HepG2 (cell line): ENCODE measurements at regions of chr4 and their contacts with region 1.

Region 1: GRCh38 chr4:52665592-52665991 is 6.5 kb upstream of the USP46 start:
- DNase-seq: peak; percentile 43
- ATAC-seq: peak; percentile 88
- H3K4me3 ChIP-seq: no peak overlapping the region
- H3K27ac ChIP-seq: no peak overlapping the region
- H3K4me1 ChIP-seq: peaks cover 27% of the 10 kb centered on the region
- H3K27me3 ChIP-seq: no peaks in the 10 kb centered on the region
- CTCF ChIP-seq: peak; percentile 64
- EP300 ChIP-seq: no peak
- POLR2A ChIP-seq: no peak
- RAD21 ChIP-seq: no peak

Region 2: GRCh38 chr4:52545099-52546069 is 120.2 kb before region 1 on chr4:
- CTCF ChIA-PET with region 1: interaction called, 6 read pairs
- POLR2A ChIA-PET with region 1: no interaction called
- in situ Hi-C with region 1: no loop called
- intact Hi-C with region 1: loop called (anchors 2 kb)
- DNase-seq: peak; percentile 49
- ATAC-seq: peak; percentile 97
- H3K4me3 ChIP-seq: no peak overlapping the region
- H3K27ac ChIP-seq: no peak overlapping the region
- H3K4me1 ChIP-seq: no peaks in the 10 kb centered on the region
- H3K27me3 ChIP-seq: no peaks in the 10 kb centered on the region; a peak in 1 of 5 replicates
- CTCF ChIP-seq: peak; percentile 88
- EP300 ChIP-seq: no peak
- POLR2A ChIP-seq: no peak
- RAD21 ChIP-seq: peak; percentile 79

Region 3: GRCh38 chr4:52588097-52588782 is 77.4 kb before region 1 on chr4:
- CTCF ChIA-PET with region 1: no interaction called
- POLR2A ChIA-PET with region 1: no interaction called
- in situ Hi-C with region 1: no loop called
- intact Hi-C with region 1: loop called (anchors 2 kb)
- DNase-seq: peak; percentile 33
- ATAC-seq: peak; percentile 96
- H3K4me3 ChIP-seq: no peak overlapping the region
- H3K27ac ChIP-seq: no peak overlapping the region
- H3K4me1 ChIP-seq: peaks cover 10% of the 10 kb centered on the region
- H3K27me3 ChIP-seq: no peaks in the 10 kb centered on the region
- CTCF ChIP-seq: peak; percentile 78
- EP300 ChIP-seq: no peak
- POLR2A ChIP-seq: no peak
- RAD21 ChIP-seq: no peak

Region 4: DNA sequence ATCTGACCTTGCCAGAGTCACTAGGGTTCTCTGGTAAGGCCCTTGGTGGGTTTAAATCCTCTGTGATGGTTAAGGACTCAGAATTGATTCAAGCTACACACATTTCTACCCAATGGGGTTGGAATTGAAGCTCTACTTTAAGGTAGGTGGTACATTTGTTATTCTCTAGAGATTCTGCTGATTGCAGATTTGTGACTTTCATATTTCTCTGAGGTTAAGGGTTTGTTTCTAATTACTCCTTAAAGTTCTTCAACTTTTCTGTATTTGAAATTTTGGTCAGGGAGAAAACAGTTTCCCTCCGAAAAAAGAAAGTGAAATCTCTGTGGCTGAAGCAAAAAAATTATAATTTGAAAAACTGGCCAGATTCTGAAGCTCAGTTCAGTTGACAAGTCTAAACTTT is 19.3 kb after region 1 on chr4:
- CTCF ChIA-PET with region 1: no interaction called
- POLR2A ChIA-PET with region 1: no interaction called
- in situ Hi-C with region 1: no loop called
- intact Hi-C with region 1: no loop called
- DNase-seq: no peak
- ATAC-seq: no peak
- H3K4me3 ChIP-seq: no peak overlapping the region
- H3K27ac ChIP-seq: no peak overlapping the region
- H3K4me1 ChIP-seq: no peaks in the 10 kb centered on the region
- H3K27me3 ChIP-seq: peaks cover 0 to 4% of the 10 kb centered on the region in 2 experiments; a peak in 1 of 5 replicates
- CTCF ChIP-seq: no peak
- EP300 ChIP-seq: no peak
- POLR2A ChIP-seq: no peak
- RAD21 ChIP-seq: no peak